HEK293 (cell line): ENCODE measurements at regions of chr11 and their contacts with region 1.

Region 1: DNA sequence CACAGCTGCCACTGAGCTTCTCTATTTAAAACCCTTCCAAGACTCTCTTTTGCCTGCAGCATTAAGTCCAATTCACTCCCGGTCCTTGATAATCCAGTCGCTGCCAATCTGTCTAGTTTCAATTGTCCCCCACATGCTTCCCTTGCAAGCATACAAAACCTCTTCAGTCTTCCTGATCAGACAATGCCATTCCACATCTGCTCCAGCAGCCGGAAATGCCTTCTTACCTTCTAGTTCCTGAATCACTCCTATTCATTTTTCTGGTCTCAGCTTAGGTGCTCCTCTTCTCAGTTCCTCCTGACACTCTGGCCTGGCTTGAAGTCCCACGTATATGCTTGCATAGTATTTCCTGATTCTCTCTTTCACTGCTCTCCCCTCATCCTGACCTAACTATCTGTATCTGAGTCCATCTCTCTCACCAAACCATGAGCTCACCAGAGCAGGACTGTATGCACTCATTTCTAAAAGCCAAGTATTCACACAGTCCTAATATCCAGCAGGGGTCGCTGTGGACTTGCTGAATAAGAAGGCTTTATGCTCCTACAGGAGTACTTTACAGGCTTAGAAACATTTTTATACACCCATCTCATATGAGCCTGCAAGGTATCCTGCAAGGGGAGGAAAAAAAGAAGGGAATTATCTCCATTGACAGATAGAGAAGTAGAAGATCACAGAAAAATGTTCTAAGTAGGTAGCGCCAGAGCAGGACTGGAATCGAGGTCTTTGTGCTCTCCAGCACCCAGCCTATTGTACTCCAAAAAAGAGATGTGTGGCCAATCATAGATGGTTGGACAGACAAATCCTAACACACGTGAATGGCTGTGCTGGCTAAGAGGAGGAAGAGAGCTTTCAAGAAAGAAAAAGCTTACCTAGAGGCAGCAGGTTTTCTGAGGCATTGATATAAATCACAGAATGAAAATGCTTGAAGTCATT is 19.2 kb downstream of the XRRA1 start:
- H3K4me3 ChIP-seq: no peak overlapping the region
- H3K27ac ChIP-seq: no peak overlapping the region
- H3K4me1 ChIP-seq: no peaks in the 10 kb centered on the region
- CTCF ChIP-seq: peak; percentile 42; the same call in 1 of the 2 replicates

Region 2: GRCh38 chr11:74849525-74850391 is 79.9 kb before region 1 on chr11:
- CTCF ChIA-PET with region 1: no interaction called
- POLR2A ChIA-PET with region 1: no interaction called
- H3K4me3 ChIP-seq: no peak overlapping the region
- H3K27ac ChIP-seq: no peak overlapping the region
- H3K4me1 ChIP-seq: no peaks in the 10 kb centered on the region
- CTCF ChIP-seq: no peak

Region 3: DNA sequence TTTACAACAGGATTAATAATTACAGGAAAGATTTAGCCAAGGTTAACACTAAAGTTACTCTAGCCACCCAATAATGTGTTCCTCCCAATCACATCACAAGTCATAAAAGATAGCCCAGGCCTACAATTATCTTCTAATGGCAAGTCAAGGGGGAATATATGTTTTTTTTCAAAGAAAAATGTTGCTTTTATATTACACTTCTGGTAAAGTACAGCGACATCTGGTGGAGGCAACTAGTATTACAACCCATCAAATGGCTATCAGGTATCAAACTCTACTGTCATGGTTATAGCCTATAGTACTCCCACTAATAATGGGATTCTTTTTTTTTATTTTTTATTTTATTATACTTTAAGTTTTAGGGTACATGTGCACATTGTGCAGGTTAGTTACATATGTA is 52.6 kb before region 1 on chr11:
- CTCF ChIA-PET with region 1: no interaction called
- POLR2A ChIA-PET with region 1: no interaction called
- H3K4me3 ChIP-seq: no peak overlapping the region
- H3K27ac ChIP-seq: no peak overlapping the region
- H3K4me1 ChIP-seq: no peaks in the 10 kb centered on the region
- CTCF ChIP-seq: no peak

Region 4: GRCh38 chr11:74941308-74941891 is 11.7 kb after region 1 on chr11:
- CTCF ChIA-PET with region 1: interaction called, 33 read pairs
- POLR2A ChIA-PET with region 1: no interaction called
- H3K4me3 ChIP-seq: no peak overlapping the region
- H3K27ac ChIP-seq: no peak overlapping the region
- H3K4me1 ChIP-seq: no peaks in the 10 kb centered on the region
- CTCF ChIP-seq: no peak

Region 5: DNA sequence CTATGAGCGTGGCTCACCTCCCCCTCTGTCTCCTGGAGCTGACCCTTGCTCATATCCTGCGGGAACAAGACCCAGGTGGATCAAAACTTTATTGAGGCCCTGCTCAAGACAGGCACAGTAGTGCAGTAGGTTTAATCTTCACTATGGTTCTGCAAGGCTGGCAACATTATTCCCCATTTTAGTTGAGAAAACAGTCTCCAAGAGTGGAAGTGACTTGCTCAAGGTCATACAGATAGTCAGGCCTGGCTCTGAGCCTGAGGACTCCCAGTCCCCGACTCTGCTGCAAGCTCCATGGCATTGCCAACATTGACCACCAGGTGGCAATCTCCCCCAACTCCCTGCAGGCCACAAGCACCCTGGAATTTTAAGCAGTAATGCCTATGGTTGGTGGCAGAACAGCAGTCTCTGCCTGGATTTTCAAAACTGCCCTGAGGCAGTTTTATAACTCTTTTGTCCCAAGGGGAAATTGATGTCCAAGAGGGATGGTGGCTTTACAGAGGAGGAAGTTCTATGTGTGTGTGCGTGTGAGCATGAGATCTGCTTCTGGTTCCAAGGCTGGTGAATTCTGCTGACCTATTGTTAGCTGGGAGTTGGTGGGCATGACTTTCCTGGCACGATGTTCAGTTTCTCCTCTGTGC is 93.2 kb after region 1 on chr11:
- CTCF ChIA-PET with region 1: interaction called, 20 read pairs
- POLR2A ChIA-PET with region 1: interaction called, 3 read pairs
- H3K4me3 ChIP-seq: no peak overlapping the region
- H3K27ac ChIP-seq: no peak overlapping the region
- H3K4me1 ChIP-seq: no peaks in the 10 kb centered on the region
- CTCF ChIP-seq: peak; percentile 67; the same call in 1 of the 2 replicates

Region 6: GRCh38 chr11:75132080-75132479 is 202.4 kb after region 1 on chr11:
- CTCF ChIA-PET with region 1: no interaction called
- POLR2A ChIA-PET with region 1: no interaction called
- H3K4me3 ChIP-seq: no peak overlapping the region
- H3K27ac ChIP-seq: no peak overlapping the region
- H3K4me1 ChIP-seq: no peaks in the 10 kb centered on the region
- CTCF ChIP-seq: no peak

Region 7: DNA sequence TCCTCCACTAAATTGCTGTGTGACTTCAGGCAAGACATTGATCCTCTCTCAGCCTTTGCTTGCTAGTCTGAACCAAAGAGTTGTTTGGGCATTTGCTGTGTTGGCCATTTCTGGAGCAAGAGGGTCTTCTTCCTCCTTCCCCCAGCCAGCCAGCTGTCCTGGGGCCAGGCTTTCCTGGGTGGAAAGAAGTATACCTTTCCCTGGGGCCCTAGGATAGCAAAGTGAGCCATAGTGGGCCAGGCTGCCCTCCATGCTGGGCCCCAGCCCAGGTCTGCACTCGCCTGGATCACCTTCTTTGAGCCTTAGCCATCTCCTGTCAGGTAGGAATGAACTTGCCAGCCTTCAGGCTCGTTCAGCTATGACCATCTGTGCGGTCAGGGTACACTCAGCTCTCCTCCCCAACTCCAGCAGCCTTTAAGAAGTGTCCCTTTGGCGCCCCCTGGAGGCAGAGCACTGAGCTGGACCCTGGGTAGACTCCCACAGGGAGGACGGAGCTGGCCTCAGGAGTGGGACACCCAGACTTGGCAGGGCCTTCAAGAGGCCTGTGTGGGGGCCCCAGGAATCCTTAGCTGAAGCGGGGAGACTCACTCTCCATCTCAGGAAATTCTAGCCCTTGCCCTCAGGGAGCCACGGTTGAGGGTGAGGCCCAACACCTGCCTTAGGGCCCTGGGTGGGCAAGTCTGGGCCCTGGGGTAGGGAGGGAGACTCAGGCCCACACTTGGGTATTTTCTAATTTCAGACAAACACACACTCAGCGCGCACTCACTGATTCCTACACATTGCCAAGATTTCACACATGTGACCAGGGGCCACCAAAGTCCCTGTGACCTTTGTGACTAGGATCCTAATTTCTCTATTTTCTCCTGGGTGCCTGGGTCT is 275.2 kb after region 1 on chr11:
- CTCF ChIA-PET with region 1: interaction called, 33 read pairs
- POLR2A ChIA-PET with region 1: no interaction called
- H3K4me3 ChIP-seq: no peak overlapping the region
- H3K27ac ChIP-seq: no peak overlapping the region
- H3K4me1 ChIP-seq: no peaks in the 10 kb centered on the region
- CTCF ChIP-seq: no peak